ENCODE measurements at regions of chr1 and their contacts with region 1.

Region 1: GRCh38 chr1:111649642-111650041 is 30.1 kb downstream of the RAP1A start:
- DNase-seq: no peak
- H3K4me3 ChIP-seq: no peak overlapping the region
- H3K27ac ChIP-seq: peak overlapping the region in 1 of 4 donors; percentile 8
- H3K4me1 ChIP-seq: peaks cover 0 to 73% (median 38%) of the 10 kb centered on the region in 4 donors
- H3K27me3 ChIP-seq: no peaks in the 10 kb centered on the region
- CTCF ChIP-seq: no peak
- EP300 ChIP-seq: no peak
- POLR2A ChIP-seq: no peak

Region 2: DNA sequence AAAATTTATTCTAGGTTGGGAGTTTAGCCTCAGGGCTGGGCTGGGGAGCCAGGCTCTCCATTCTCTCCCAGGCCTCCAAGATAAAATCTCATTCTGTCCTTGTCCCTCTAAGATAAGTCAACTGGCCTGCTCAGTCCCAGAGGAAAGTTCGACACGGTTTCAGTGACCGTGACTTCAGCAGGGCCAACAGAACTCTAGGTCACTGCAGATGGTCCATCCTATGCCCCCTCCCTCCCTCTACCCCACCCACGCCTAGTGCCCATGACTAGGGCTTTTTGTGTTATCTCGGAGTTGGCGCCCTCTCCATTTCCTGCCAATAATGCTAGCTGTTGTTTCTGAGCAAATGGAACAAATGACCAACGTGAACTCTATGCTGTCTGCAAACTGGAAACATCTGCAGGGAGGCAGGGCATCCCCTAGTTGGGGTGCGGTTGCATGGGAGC is 136.1 kb before region 1 on chr1:
- intact Hi-C with region 1: loop called (anchors 1 kb)
- DNase-seq: peak; percentile 77
- H3K4me3 ChIP-seq: no peak overlapping the region
- H3K27ac ChIP-seq: peak overlapping the region; percentile 9 to 95 (median 94)
- H3K4me1 ChIP-seq: peaks cover 0 to 82% (median 63%) of the 10 kb centered on the region in 4 donors
- H3K27me3 ChIP-seq: no peaks in the 10 kb centered on the region
- CTCF ChIP-seq: no peak
- EP300 ChIP-seq: no peak
- POLR2A ChIP-seq: no peak